ENCODE measurements at regions of chr3 and their contacts with region 1.

Region 1: DNA sequence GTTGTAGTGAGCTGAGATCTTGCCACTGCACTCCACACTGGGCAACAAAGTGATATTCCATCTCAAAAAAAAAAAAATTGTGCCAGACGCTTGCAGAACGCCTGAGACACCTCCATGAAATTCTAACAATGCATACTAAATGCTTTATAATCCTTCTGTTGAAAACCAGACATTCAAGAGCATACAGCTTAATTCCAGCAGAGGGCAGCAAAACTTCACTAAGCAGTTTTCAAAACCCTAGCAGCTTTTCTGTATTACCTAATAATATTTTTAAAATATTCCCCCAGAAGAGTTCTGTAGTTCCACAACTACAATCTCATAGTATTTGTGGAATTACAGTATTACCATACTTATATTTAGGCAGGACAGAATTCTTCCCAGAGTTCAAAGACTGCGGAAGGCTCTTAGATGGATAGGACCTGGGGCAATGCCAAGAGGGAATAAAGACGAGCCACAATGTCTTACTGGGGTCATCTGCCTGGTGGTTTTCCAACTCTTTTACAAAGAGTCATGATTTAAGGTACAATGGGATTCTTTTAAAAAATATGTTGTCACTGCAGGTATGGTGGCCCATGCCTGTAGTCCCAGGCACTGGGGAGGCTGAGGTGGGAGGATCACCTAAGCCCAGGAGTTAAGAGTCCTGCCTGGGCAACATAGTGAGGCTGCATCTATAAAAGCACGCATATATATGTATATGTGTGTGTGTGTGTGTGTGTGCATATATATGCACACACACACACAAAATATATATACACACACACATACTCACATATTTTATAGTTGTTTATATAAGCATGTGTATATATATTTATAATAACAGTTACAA is 19.6 kb upstream of the TASOR start:
- DNase-seq: peak; percentile 70
- H3K4me3 Mint-ChIP-seq: no peak overlapping the region
- H3K27ac Mint-ChIP-seq: no peak overlapping the region
- H3K4me1 Mint-ChIP-seq: peaks cover 17% of the 10 kb centered on the region
- H3K27me3 Mint-ChIP-seq: no peaks in the 10 kb centered on the region

Region 2: GRCh38 chr3:56347219-56347871 is 355.4 kb before region 1 on chr3:
- CTCF ChIA-PET with region 1: no interaction called
- intact Hi-C with region 1: loop called (anchors 10 kb)
- DNase-seq: peak; percentile 70
- H3K4me3 Mint-ChIP-seq: no peak overlapping the region
- H3K27ac Mint-ChIP-seq: no peak overlapping the region
- H3K4me1 Mint-ChIP-seq: no peaks in the 10 kb centered on the region
- H3K27me3 Mint-ChIP-seq: peaks cover 6% of the 10 kb centered on the region

Region 3: DNA sequence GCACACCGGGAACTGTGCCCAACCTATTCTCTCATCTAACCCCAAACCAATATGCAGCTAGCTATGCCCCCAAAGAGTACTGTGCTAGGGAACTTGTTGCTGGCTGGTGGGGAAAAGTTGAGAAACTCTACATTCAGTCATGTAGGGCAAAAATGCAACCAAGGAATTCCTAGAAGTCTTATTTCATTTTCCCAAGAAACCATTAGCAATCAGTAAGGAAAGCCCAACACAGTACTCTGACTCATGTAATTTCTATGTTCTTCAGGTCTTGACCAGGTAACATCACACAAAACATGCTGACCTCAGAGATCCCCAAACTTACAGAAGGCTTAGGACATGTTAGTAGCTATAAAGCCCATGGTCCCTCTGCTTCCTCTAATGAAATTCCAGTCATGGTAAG is 71.7 kb before region 1 on chr3:
- CTCF ChIA-PET with region 1: no interaction called
- intact Hi-C with region 1: no loop called
- DNase-seq: no peak
- H3K4me3 Mint-ChIP-seq: no peak overlapping the region
- H3K27ac Mint-ChIP-seq: no peak overlapping the region
- H3K4me1 Mint-ChIP-seq: no peaks in the 10 kb centered on the region
- H3K27me3 Mint-ChIP-seq: no peaks in the 10 kb centered on the region

Region 4: DNA sequence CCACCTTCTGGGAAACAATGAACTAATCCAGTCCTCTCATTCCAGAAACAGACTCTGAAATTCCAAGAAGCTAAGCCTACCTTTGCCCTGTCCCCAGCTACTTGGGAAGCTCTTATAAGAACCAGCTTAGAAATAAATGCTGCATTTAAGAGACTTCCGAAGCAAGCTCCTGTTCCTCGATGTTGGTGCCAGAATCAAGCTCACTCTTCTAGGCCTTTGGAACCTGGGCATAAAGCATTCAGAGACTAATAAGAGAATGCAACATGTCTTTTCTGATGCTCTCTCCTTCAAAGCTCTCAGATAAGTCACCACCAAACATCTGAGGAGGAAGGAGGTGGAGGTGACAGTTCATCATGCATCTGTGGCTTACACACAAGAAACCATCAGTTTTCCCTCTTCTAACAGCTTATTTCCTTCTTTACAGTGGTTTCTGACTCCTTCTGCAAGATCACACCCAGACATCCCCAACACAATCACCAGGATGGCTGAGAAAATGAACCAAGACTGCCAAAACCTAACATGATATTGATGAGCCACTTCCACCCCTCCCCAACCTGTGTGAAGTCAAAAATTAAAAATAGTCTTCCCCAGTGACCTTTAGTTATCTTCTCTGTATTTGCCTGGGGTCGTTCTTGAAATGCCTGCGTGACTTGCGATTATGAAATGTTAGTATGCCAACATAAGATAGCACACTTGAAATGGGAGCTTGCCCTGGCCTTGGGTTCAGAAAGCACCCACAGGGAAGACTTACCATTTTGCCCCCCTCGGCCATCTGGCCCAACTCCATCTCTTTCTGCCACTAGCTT is 87.5 kb after region 1 on chr3:
- CTCF ChIA-PET with region 1: interaction called, 204 read pairs
- intact Hi-C with region 1: no loop called
- DNase-seq: peak; percentile 57
- H3K4me3 Mint-ChIP-seq: peak overlapping the region; percentile 19
- H3K27ac Mint-ChIP-seq: peak overlapping the region; percentile 98
- H3K4me1 Mint-ChIP-seq: peaks cover 84% of the 10 kb centered on the region
- H3K27me3 Mint-ChIP-seq: no peaks in the 10 kb centered on the region

Region 5: DNA sequence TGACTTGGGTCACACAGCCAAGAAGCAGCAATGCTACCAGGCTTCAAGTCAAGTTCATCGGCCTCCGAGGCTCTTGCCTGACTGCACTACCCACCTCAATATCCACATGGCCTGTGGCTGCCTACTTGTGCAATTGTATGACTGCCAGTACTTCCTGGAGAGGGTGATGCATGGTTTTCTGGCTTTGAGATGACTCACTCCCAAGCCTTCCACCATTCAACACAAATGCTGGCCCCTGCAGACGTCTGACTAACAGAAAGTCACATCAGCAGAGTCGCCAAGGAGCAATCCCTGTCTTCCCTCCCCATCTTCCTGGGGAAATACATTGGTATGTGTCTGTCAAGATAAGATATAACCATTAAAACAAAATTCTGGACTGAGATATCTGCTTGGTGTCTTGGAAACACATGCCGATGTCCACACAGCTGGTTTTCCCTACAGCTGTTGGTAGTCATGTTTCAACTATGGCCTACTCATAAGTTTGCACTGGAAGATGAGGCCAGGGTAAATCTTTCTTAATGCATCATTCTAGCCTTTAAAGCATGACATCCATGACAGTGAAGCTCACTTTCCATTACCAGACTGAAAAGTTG is 278.2 kb after region 1 on chr3:
- CTCF ChIA-PET with region 1: interaction called, 187 read pairs
- intact Hi-C with region 1: no loop called
- DNase-seq: peak; percentile 82
- H3K4me3 Mint-ChIP-seq: no peak overlapping the region
- H3K27ac Mint-ChIP-seq: peak overlapping the region; percentile 65
- H3K4me1 Mint-ChIP-seq: peaks cover 25% of the 10 kb centered on the region
- H3K27me3 Mint-ChIP-seq: no peaks in the 10 kb centered on the region

Region 6: DNA sequence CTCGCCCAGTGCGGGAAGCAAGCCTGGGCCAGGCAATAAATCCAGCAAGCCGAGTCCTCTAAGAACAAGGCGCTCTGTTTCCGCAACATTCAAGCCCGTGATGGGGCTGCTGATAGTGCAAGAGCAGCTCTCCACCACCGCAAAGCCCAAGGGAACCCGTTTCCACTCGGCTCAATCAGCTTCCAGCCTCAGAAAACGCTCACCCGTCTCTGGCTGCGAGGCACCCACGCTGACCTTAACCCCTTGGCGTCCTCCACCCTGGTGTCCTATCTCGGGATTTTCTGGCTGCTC is 375.6 kb after region 1 on chr3:
- CTCF ChIA-PET with region 1: no interaction called
- intact Hi-C with region 1: loop called (anchors 10 kb)
- DNase-seq: peak; percentile 40
- H3K4me3 Mint-ChIP-seq: peak overlapping the region; percentile 55
- H3K27ac Mint-ChIP-seq: no peak overlapping the region
- H3K4me1 Mint-ChIP-seq: peaks cover 4% of the 10 kb centered on the region
- H3K27me3 Mint-ChIP-seq: peaks cover 43% of the 10 kb centered on the region